OCI-LY7 (cell line): ENCODE measurements at regions of chr1 and their contacts with region 1.

Region 1: DNA sequence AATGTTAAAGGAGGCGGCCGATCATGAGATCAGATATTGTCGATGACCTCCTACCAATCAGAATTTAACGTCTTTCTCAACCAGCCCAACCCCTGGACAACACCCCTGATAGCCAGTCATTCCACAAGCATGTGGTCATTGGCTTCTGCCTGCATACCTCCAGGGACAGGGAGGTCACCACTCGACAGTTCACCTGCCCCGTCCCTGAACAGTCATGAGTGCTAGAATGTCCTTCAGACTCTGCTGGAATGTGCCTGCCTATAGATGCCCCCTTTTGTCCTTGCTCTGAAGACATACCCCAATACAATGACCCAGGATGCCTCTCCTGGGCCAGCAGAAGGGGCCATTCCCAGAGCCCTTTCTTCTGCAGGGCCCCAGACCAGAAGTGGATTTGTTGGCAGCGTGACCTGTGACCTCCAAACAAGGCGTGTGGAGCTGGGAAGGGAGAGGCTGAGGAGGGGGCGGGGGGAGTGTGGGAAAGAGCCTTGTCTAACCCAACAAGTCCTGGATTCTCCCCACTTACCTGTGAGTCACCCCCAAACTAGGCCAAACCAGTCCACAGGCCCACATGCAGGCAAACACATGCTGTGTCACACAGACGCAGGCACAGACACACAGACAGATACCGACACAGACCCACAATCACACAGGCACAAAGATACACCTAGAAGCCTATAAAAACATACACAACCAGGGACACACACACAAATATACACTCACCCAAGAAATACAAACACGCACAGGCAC is 2.2 kb downstream of the CRYBG2 start:
- DNase-seq: no peak
- H3K4me3 ChIP-seq: no peak overlapping the region
- H3K27ac ChIP-seq: no peak overlapping the region
- H3K4me1 ChIP-seq: no peaks in the 10 kb centered on the region
- CTCF ChIP-seq: no peak

Region 2: GRCh38 chr1:26284597-26285360 is 67.0 kb before region 1 on chr1:
- CTCF ChIA-PET with region 1: no interaction called
- POLR2A ChIA-PET with region 1: no interaction called
- intact Hi-C with region 1: no loop called
- DNase-seq: peak; percentile 83
- H3K4me3 ChIP-seq: no peak overlapping the region
- H3K27ac ChIP-seq: peak overlapping the region; percentile 98
- H3K4me1 ChIP-seq: peaks cover 62% of the 10 kb centered on the region
- CTCF ChIP-seq: peak; percentile 97

Region 3: DNA sequence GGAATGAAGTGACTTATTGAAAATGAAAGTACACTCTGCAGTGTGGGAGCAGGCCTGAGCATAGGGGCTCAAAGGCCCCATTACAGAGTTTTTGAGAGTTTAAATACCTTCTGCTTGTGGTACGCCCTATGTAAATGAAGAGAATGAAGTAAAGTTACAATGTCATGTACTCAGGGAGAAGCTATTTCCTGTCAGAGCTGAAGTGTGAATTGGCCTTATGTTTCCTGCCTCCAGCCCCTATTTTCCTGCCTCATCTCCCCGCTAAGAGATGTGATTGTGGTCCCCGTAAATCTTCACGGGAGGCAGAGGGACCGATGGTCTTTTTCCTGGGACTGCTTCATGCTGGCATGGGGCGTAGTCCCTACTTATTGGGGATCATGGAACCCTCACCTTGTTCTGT is 23.3 kb after region 1 on chr1:
- CTCF ChIA-PET with region 1: no interaction called
- POLR2A ChIA-PET with region 1: interaction called, 10 read pairs
- intact Hi-C with region 1: no loop called
- DNase-seq: no peak
- H3K4me3 ChIP-seq: no peak overlapping the region
- H3K27ac ChIP-seq: no peak overlapping the region
- H3K4me1 ChIP-seq: no peaks in the 10 kb centered on the region
- CTCF ChIP-seq: no peak

Region 4: DNA sequence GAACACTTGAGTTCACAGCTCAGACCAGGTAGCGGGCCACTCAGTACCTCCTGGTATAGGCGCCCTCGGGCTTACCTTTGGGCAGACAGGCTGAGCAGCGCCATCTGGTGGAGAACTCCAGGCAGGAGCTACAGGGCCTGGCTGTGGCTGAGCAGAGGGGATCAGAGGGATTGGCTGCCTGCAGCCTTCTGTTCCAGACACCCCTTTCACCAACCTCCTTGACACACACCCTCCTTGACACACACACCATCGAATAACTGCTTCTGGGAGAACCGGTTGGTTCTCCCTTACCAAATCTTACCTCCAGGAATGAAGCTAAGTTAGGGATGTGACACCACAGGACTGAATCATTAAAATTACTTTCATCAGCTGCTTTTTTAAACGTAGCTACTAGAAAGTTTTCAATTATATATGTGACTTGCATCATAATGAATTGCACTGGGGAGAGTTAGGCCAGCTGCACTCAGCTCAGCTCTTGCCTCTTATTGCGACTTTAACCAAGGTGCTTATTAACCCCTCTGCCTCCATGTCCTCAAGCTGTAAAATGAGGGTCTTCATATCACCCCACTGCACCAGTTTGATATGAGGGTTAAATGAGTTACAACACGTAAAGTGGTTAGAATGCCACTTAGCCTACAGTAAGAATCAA is 65.5 kb after region 1 on chr1:
- CTCF ChIA-PET with region 1: no interaction called
- POLR2A ChIA-PET with region 1: no interaction called
- intact Hi-C with region 1: no loop called
- DNase-seq: peak; percentile 86
- H3K4me3 ChIP-seq: no peak overlapping the region
- H3K27ac ChIP-seq: no peak overlapping the region
- H3K4me1 ChIP-seq: no peaks in the 10 kb centered on the region
- CTCF ChIP-seq: peak; percentile 92

Region 5: GRCh38 chr1:26431979-26432695 is 80.4 kb after region 1 on chr1 and contains the start of gene DHDDS:
- CTCF ChIA-PET with region 1: no interaction called
- POLR2A ChIA-PET with region 1: no interaction called
- intact Hi-C with region 1: no loop called
- DNase-seq: peak; percentile 98
- H3K4me3 ChIP-seq: peak within 1 kb of the TSS; percentile 89
- H3K27ac ChIP-seq: peak within 1 kb of the TSS; percentile 38
- H3K4me1 ChIP-seq: peaks cover 33% of the 10 kb centered on the region
- CTCF ChIP-seq: no peak
- total RNA-seq, gene DHDDS: 33.2 and 39.0 TPM in 2 replicates

Region 6: DNA sequence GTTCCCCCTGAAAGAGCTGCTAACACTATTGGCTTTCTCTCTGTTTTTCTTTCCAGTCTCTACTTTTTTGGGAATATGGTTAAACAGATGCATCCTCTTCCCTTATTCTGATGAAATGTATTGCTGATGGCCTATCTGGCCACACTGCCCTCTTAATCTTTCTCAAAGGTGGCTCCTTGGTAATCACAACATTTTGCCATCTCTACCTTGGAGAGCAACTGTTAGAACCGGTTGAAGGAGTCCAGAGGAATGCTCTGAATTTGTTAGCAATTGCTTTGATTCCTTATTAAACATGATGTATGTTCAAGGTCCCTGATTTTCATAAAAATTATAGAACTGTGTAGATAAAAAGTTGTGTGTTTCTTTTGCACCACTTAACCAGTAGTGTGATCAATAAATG is 294.0 kb after region 1 on chr1:
- CTCF ChIA-PET with region 1: no interaction called
- POLR2A ChIA-PET with region 1: no interaction called
- intact Hi-C with region 1: no loop called
- DNase-seq: no peak
- H3K4me3 ChIP-seq: no peak overlapping the region
- H3K27ac ChIP-seq: no peak overlapping the region
- H3K4me1 ChIP-seq: no peaks in the 10 kb centered on the region
- CTCF ChIP-seq: no peak